Endothelial cell of umbilical vein (primary cell): ENCODE measurements at regions of chr5 and their contacts with region 1.

Region 1: GRCh38 chr5:137320056-137321045 is 178.8 kb downstream of the SPOCK1 start:
- DNase-seq: peak; percentile 79
- H3K4me3 ChIP-seq: no peak overlapping the region
- H3K27ac ChIP-seq: no peak overlapping the region
- H3K4me1 ChIP-seq: peaks cover 6% of the 10 kb centered on the region
- H3K27me3 ChIP-seq: no peaks in the 10 kb centered on the region
- CTCF ChIP-seq: peak; percentile 72 to 77
- POLR2A ChIP-seq: no peak

Region 2: GRCh38 chr5:136963504-136963903 is 356.8 kb before region 1 on chr5:
- CTCF ChIA-PET with region 1: no interaction called
- POLR2A ChIA-PET with region 1: no interaction called
- dilution Hi-C with region 1: no loop called
- intact Hi-C with region 1: no loop called
- DNase-seq: no peak
- H3K4me3 ChIP-seq: no peak overlapping the region
- H3K27ac ChIP-seq: no peak overlapping the region
- H3K4me1 ChIP-seq: no peaks in the 10 kb centered on the region
- H3K27me3 ChIP-seq: no peaks in the 10 kb centered on the region
- CTCF ChIP-seq: no peak
- POLR2A ChIP-seq: no peak

Region 3: GRCh38 chr5:137179203-137179602 is 141.1 kb before region 1 on chr5:
- CTCF ChIA-PET with region 1: no interaction called
- POLR2A ChIA-PET with region 1: no interaction called
- dilution Hi-C with region 1: no loop called
- intact Hi-C with region 1: no loop called
- DNase-seq: no peak
- H3K4me3 ChIP-seq: no peak overlapping the region
- H3K27ac ChIP-seq: no peak overlapping the region
- H3K4me1 ChIP-seq: no peaks in the 10 kb centered on the region
- H3K27me3 ChIP-seq: no peaks in the 10 kb centered on the region
- CTCF ChIP-seq: no peak
- POLR2A ChIP-seq: no peak

Region 4: DNA sequence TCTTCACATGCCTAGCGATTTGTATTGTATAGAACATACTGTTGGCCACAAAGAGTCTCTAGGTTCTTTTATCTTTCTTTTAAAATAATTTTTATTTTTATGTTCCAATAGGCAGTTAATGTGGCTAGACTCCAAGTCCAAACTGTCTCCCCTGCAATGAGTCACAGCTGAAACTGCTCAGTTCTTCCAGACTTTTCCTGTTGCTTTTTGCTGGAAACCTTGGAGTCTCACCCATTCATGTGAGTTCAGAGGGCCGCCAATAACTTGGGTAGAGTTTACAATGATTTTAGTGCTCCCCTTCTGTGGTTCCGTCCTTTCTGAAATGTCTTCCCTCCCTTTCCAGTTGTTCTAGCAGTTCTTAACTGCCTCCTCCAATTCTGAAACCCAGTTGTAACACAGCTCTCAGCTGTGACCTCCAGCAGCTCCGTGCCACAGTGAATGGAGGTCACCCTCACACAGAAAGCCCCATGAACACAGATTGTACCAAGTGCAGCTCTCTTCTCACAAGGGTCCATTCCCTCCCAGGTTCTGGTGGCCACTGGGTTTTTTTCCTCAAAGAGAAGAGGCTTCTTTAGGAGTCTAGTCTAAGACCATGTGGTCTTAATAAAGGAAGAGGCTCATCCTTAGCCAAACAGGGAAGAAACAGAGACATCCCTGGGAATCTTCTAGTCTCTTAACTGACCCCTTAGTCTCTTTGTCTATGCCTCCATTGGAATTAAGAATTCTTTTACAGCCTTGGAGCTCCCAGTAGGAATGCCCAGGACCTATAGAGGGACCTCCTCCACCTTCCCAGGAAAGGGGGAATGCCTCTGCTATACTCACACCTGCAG is 19.7 kb before region 1 on chr5:
- CTCF ChIA-PET with region 1: interaction called, 20 read pairs
- POLR2A ChIA-PET with region 1: no interaction called
- dilution Hi-C with region 1: no loop called
- intact Hi-C with region 1: no loop called
- DNase-seq: peak; percentile 94
- H3K4me3 ChIP-seq: peak overlapping the region in 1 of 3 experiments; percentile 21
- H3K27ac ChIP-seq: peak overlapping the region; percentile 89
- H3K4me1 ChIP-seq: peaks cover 49% of the 10 kb centered on the region
- H3K27me3 ChIP-seq: no peaks in the 10 kb centered on the region
- CTCF ChIP-seq: no peak
- POLR2A ChIP-seq: no peak

Region 5: DNA sequence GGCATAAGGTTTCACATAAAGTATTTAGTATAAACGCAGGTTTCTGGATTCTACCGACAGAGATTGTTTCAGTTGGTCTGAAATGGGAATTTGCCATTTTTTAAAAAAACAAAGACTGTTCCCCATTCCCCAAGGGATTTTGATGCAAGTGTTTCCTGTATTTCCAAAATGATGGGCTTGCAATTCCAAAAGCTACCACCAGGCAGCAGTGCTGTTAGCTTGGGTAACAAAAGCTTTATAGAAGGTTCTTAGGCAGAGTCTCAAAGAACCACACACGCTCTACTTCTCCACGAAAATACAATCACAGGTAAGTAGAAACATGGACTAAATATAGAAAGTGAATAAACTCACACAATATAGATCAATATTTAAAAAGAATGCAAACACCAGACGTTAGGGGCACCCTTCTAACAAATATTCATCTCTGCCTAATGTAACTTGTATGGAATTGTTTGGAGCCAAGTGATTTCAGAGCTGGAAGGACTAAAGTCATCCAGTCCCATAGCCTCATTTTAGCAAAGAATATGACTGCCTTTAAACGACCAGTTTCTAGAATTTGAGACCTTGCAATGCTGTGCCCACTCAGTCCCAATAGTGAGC is 24.5 kb after region 1 on chr5:
- CTCF ChIA-PET with region 1: interaction called, 172 read pairs
- POLR2A ChIA-PET with region 1: no interaction called
- dilution Hi-C with region 1: no loop called
- intact Hi-C with region 1: loop called (anchors 1 kb)
- DNase-seq: peak; percentile 76
- H3K4me3 ChIP-seq: no peak overlapping the region
- H3K27ac ChIP-seq: peak overlapping the region; percentile 7
- H3K4me1 ChIP-seq: peaks cover 55% of the 10 kb centered on the region
- H3K27me3 ChIP-seq: no peaks in the 10 kb centered on the region
- CTCF ChIP-seq: peak; percentile 73 to 85
- POLR2A ChIP-seq: no peak

Region 6: DNA sequence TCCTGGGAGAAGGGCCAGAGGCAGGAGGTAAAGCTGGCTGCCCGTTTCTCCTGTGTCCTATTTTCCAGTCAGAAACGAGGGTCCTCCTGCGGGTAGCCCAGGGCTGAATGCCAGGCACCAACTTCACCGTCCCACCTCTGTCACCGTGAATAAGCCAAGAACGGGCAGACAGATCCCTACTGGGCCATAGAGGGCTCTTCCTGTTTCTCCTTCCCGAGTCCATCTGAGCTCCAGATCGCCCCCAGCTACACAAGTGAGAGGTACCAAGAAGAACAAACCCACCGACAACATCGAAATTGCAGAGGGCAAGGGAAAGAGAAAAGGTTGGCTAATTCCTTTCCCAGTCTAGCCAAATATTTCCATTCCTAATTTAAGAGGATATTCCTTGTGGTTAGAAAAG is 85.0 kb after region 1 on chr5:
- CTCF ChIA-PET with region 1: interaction called, 13 read pairs
- POLR2A ChIA-PET with region 1: no interaction called
- dilution Hi-C with region 1: no loop called
- intact Hi-C with region 1: no loop called
- DNase-seq: no peak
- H3K4me3 ChIP-seq: no peak overlapping the region
- H3K27ac ChIP-seq: no peak overlapping the region
- H3K4me1 ChIP-seq: peaks cover 2% of the 10 kb centered on the region
- H3K27me3 ChIP-seq: no peaks in the 10 kb centered on the region
- CTCF ChIP-seq: no peak
- POLR2A ChIP-seq: no peak

Region 7: GRCh38 chr5:137487600-137487999 is 167.2 kb after region 1 on chr5:
- CTCF ChIA-PET with region 1: interaction called, 54 read pairs
- POLR2A ChIA-PET with region 1: no interaction called
- dilution Hi-C with region 1: no loop called
- intact Hi-C with region 1: no loop called
- DNase-seq: peak; percentile 87
- H3K4me3 ChIP-seq: no peak overlapping the region
- H3K27ac ChIP-seq: peak overlapping the region; percentile 77
- H3K4me1 ChIP-seq: peaks cover 28% of the 10 kb centered on the region
- H3K27me3 ChIP-seq: no peaks in the 10 kb centered on the region
- CTCF ChIP-seq: no peak
- POLR2A ChIP-seq: no peak

Region 8: GRCh38 chr5:137563646-137564397 is 243.5 kb after region 1 on chr5:
- CTCF ChIA-PET with region 1: interaction called, 12 read pairs
- POLR2A ChIA-PET with region 1: no interaction called
- dilution Hi-C with region 1: no loop called
- intact Hi-C with region 1: loop called (anchors 5 kb)
- DNase-seq: peak; percentile 95
- H3K4me3 ChIP-seq: peak overlapping the region in 1 of 3 experiments; percentile 0
- H3K27ac ChIP-seq: peak overlapping the region; percentile 83
- H3K4me1 ChIP-seq: peaks cover 40% of the 10 kb centered on the region
- H3K27me3 ChIP-seq: no peaks in the 10 kb centered on the region
- CTCF ChIP-seq: no peak
- POLR2A ChIP-seq: no peak

Region 9: DNA sequence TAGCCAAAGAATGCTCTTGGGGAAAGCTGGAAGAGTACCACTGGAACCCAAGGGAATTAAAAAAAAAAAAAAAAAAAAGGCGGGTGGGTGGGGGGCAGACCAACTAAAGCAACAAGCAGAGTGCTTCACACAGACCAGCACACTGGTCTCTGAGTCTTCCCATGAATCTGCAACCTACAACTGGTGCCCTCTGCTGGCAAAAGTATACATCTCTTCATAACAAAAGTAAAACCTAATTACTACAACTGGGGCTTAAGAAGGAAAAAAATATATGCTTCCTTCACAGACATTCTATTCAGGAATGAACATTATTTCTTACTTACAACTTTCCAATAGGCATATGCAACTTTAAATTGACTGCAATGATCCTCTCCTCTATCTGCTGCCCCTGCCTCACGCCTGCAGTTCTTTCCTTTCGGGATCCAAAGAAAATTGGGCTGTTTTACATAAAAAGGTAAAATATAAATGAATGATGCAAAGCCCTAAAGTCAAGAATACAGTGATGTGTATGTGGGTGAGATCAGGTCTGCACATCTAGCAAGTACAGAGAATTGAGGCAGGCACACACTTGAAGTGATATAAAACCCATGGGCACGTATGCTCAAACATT is 422.8 kb after region 1 on chr5:
- CTCF ChIA-PET with region 1: interaction called, 6 read pairs
- POLR2A ChIA-PET with region 1: no interaction called
- dilution Hi-C with region 1: no loop called
- intact Hi-C with region 1: loop called (anchors 1 kb)
- DNase-seq: peak; percentile 72
- H3K4me3 ChIP-seq: no peak overlapping the region
- H3K27ac ChIP-seq: no peak overlapping the region
- H3K4me1 ChIP-seq: no peaks in the 10 kb centered on the region
- H3K27me3 ChIP-seq: no peaks in the 10 kb centered on the region
- CTCF ChIP-seq: peak; percentile 65 to 67
- POLR2A ChIP-seq: no peak